ENCODE measurements at regions of chr10 and their contacts with region 1.

Region 1: DNA sequence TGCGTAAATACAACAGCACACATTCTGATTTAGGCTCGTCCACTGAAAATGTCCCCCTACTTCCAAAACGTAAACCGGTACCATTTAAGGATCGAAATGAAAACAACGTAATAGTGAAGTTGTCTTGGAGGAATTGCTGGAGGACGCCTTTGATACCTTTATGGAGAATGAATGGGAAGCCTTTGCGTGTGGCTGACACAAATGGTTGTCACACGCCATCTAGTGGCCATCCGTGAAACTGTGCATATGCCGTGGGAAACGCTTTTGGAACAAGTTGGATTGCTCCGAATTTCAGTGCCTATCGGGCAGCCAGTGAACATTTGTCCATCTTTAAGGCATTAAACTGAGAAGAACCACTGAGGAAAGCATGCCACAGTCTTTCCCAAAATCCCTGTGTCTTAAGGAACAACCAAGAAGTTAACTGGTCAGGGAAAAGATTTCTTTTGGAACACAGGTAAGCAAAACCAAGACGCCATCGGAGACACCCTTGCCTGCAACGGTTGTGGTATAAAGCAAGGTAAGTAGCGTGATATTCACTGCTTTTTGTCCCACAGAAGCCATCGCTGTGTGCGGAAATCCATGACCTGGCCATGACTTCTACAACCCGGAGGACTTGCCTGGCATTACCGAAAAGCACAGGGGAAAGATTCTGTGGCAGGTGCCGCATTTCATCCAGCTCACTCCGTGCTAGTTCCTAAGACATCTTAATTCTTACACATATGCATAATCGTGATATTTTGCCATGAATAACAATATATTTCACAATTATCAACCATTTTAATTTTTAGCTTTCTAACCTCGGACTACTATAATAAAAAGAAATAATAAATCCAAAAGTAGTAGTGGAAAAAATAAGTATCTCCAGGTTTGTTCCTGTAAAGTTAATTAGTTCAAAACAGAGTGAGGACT is 100.6 kb downstream of the FAM204A start:
- DNase-seq: peak; percentile 80
- H3K4me3 ChIP-seq: no peak overlapping the region
- H3K27ac ChIP-seq: no peak overlapping the region
- H3K4me1 ChIP-seq: no peaks in the 10 kb centered on the region
- H3K27me3 ChIP-seq: peaks cover 25% of the 10 kb centered on the region
- CTCF ChIP-seq: peak; percentile 91 to 95 (median 91)
- POLR2A ChIP-seq: no peak

Region 2: GRCh38 chr10:117216611-117217195 is 1024.8 kb before region 1 on chr10:
- intact Hi-C with region 1: loop called (anchors 10 kb)
- DNase-seq: peak; percentile 46
- H3K4me3 ChIP-seq: peak overlapping the region; percentile 20 to 43
- H3K27ac ChIP-seq: no peak overlapping the region
- H3K4me1 ChIP-seq: peaks cover 10% of the 10 kb centered on the region
- H3K27me3 ChIP-seq: no peaks in the 10 kb centered on the region
- CTCF ChIP-seq: peak; percentile 99 to 100 (median 100)
- POLR2A ChIP-seq: no peak

Region 3: GRCh38 chr10:117496616-117497028 is 744.9 kb before region 1 on chr10:
- intact Hi-C with region 1: loop called (anchors 2 kb)
- DNase-seq: peak; percentile 67
- H3K4me3 ChIP-seq: no peak overlapping the region
- H3K27ac ChIP-seq: no peak overlapping the region
- H3K4me1 ChIP-seq: no peaks in the 10 kb centered on the region
- H3K27me3 ChIP-seq: no peaks in the 10 kb centered on the region
- CTCF ChIP-seq: peak; percentile 66 to 94 (median 88)
- POLR2A ChIP-seq: no peak

Region 4: DNA sequence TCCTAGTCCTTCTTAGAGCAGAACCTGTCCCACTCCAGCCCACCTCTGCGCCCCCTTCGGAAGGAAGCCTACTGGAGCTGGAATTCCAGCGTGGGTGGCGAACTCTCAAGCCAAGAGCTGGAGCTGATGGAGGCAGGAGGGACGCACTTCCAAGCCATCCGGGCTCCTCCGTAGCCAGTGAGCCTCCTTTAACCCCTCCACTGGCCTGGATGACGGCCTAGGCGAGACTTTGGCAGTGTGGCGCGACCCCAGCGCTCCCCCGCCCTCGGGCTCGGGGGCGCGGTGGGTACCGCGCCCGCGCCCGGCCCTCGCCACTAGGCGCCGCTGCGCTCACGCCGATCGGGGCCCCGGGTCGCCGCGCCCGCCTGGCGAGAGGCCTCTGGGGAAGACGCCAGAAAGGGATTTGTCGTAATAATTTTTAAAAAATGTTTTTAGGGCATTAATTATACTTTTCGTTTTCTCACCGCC is 704.0 kb before region 1 on chr10:
- intact Hi-C with region 1: loop called (anchors 1 kb)
- DNase-seq: no peak
- H3K4me3 ChIP-seq: no peak overlapping the region
- H3K27ac ChIP-seq: no peak overlapping the region
- H3K4me1 ChIP-seq: peaks cover 14% of the 10 kb centered on the region
- H3K27me3 ChIP-seq: peaks cover 66% of the 10 kb centered on the region
- CTCF ChIP-seq: peak; percentile 55 to 69 (median 62)
- POLR2A ChIP-seq: no peak

Region 5: DNA sequence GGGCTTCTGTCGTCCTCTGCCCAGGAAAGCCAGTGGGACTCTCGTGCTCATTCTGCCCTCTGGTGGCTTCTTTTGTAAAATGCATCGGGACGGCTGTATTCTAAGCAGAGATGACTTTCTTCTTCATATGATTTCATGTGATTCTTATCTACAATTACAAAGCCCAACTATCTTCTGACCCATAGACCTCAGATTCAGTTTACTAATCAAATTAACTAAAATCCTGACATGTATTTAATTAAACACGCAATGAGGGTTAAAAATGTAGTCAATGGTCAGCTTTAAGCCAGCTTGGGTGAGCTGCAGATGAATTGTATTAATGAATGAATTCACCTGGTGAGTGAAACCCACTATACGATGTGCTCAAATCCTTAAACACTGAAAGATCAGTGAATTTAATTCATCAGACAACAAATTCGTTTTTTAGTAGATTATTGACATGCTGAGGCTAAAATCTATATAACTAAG is 218.3 kb after region 1 on chr10:
- intact Hi-C with region 1: loop called (anchors 10 kb)
- DNase-seq: peak; percentile 59
- H3K4me3 ChIP-seq: no peak overlapping the region
- H3K27ac ChIP-seq: peak overlapping the region in 1 of 2 donors; percentile 28
- H3K4me1 ChIP-seq: no peaks in the 10 kb centered on the region
- H3K27me3 ChIP-seq: no peaks in the 10 kb centered on the region
- CTCF ChIP-seq: peak in 3 of 4 experiments; percentile 68 to 70 (median 69)
- POLR2A ChIP-seq: no peak